Left ventricle myocardium superior (tissue), 1 donor: ENCODE measurements at regions of chr14 and their contacts with region 1.

Region 1: DNA sequence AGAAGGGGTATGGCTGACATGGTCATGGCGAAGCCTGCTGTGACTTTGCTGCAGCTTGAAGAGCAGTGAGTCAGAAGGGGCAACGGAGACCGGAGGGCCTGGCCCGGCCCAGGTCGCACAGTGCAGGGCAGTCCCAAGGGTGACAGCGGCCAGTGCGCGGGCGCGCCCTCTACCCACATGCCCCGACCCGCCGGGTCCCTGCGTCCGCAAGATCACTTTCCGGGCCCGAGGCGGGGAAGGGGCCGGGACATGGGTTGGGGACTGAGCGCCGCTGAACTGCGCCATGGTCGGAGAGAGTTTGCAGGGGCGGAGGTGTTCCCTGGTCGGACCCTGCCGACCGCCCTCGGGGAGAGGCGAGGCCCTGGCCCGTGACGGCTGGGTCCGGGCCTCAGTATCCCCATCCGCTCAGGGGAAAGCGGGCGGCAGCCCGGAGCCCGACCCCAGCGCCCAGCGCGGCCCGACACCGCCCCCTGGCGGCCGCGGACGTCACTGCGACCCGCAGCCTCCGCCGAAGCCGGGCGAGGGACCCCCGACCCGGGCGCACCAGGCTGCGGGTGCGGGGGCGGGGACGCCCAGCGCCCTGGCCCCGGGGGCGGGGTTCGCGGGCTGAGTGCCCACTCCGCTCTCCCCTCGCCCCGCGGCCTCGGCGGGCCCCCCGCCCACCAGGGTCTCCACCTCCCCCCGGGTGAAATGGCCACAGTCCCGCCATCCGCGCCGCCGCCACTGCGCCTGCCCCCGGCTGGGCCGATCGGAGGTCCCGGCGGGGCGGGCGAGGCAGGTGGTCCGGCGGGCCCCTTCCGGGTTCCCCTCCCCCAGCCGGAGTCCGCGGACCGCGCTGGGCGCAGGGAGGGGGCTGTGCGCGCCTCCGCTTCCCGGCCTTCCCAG is 7.2 kb upstream of the ANKRD9 start:
- DNase-seq: peak; percentile 83
- ATAC-seq: peak; percentile 83

Region 2: DNA sequence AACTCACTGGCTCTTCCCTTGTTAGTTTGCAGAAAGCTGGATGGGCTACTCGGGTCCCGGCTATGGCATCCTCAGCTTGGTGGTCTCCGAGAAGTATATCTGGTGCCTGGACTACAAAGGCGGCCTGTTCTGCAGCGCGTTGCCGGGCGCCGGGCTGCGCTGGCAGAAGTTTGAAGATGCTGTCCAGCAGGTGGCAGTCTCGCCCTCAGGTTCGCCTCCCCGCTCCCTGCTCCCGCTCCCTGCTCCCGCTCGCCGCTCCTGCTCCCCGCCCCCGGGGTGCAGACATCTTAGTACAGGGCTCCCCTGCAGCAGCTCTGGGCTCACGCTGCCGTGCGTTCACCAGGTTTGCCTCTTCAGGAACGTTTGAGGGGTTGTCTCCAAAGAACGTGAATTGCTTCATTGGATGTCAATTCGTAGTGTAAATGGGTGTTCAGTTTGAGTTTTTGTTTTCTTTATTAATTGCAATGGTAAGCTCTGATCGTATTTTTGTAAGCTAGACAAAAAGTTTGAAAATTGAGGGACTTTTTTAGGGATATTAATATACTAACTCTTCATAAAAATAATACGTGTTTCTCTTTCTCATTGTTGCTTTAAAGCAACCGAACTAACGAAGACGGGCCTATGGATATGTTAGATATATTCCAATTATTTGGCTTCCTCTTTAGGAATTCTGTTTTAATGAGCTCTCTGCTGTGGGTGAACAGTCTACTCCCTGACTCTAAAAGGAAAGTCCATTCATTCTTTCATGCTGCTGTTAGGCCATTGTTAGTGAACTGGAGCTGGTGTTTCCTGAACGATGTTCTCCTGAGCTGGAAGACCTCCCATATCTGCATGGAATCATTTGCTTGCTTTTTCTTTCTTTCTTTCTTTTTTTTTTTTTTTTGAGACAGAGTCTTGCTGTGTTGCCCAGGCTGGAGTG is 78.5 kb before region 1 on chr14:
- intact Hi-C with region 1: loop called (anchors 5 kb)
- DNase-seq: peak; percentile 92
- ATAC-seq: peak; percentile 96